Ovary (tissue), 10 donors: ENCODE measurements at regions of chr2 and their contacts with region 1.

Region 1: GRCh38 chr2:55768991-55769390 is 75.3 kb upstream of the PNPT1 start:
- DNase-seq: no peak
- H3K4me3 ChIP-seq: no peak overlapping the region
- H3K27ac ChIP-seq: no peak overlapping the region
- H3K4me1 ChIP-seq: no peaks in the 10 kb centered on the region
- H3K27me3 ChIP-seq: no peaks in the 10 kb centered on the region
- CTCF ChIP-seq: no peak
- EP300 ChIP-seq: no peak
- POLR2A ChIP-seq: no peak

Region 2: DNA sequence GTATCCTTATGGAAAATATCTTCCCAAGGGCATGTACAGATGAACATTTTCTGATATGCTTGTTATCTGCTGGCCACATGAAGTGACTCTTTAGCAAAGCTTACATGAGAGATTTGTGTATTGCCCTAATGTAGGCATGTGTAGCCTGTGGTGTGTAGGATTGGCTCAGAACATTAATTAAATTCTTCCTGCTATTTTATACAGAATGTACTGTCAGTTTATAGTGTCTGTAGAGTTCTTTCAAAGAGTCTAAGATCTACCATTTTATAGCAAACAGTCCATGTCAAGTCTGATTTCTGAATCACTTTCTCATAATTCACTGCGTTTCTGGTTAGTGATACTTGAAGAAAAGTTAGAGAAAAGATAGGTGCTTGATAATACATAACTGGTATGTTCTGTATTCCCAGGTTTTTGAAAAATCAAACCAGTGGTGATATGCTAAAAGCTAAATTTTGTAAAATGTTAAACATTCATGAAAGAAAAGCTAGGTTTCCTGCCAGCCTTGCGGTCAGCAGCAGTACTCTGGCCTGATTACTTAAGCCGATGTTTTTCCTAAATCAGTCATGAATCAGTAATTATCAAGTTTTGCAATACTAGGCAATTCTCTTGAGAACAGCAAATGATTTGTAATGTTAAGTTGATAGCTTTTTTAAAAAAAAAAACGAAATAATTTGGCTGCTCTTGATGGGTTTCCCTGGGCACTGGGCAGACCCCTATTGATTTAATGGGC is 185.5 kb after region 1 on chr2:
- intact Hi-C with region 1: loop called in 1 of 4 experiments (anchors 5 kb)
- DNase-seq: peak in 1 of 5 donors; percentile 32
- H3K4me3 ChIP-seq: no peak overlapping the region
- H3K27ac ChIP-seq: no peak overlapping the region
- H3K4me1 ChIP-seq: peaks cover 3% of the 10 kb centered on the region
- H3K27me3 ChIP-seq: no peaks in the 10 kb centered on the region
- CTCF ChIP-seq: peak in 1 of 3 donors; percentile 17
- EP300 ChIP-seq: no peak
- POLR2A ChIP-seq: no peak